Prostate gland (tissue), 2 donors: ENCODE measurements at regions of chr22 and their contacts with region 1.

Region 1: GRCh38 chr22:37199103-37199759 is 11.2 kb upstream of the C1QTNF6 start:
- DNase-seq: peak; percentile 96
- H3K4me3 ChIP-seq: peak overlapping the region; percentile 38 to 64
- H3K27ac ChIP-seq: peak overlapping the region; percentile 89 to 94
- H3K4me1 ChIP-seq: peaks cover 18% of the 10 kb centered on the region
- H3K27me3 ChIP-seq: no peaks in the 10 kb centered on the region
- CTCF ChIP-seq: peak; percentile 93 to 99 (median 96)
- POLR2A ChIP-seq: peak; percentile 99

Region 2: DNA sequence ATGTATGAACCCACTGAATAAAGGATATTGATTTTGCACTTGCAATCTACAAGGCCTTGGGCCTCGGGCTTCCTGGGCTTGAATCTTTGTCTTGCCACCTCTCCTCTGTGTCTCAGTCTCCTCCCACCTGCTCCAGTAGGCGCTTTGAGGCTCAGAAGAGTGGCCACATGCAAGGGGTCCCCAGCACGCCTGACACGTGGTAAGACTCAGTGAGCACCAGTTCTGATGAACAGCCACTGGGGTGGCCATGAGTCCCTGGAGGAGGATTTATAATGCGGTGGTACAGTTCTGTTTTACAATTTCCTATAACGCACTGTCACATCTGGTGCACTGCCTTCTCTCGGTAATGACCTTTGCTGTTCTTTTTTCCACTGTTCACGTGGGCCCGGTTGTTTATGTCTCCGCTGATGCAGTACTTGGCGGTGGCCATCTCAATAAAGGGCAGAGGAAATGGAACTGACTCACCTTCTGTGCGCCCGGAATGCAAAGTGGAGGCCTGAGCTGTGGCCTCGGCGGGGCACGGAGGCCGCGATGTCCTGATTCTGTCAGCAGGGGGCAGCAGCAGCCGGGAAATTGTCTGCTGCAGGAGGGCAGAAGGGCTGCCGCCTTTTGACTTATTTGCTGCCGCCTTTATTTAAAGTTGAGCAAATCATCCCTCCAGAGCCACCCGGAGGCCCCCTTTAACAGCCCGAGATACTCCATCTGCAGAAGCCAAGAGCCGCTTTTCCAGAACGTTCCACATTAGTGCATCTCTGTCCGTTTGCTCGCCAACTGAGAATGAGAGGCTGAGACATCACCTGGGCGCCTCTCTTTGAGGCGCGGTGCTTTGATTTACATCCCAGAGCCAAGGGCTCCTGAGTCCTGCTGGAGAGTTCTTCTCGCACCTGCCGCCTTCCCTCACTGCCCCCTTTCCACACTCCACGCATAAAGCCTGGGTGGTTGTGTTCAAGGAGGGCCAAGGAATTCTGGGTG is 417.3 kb before region 1 on chr22:
- intact Hi-C with region 1: loop called (anchors 10 kb)
- DNase-seq: peak; percentile 69
- H3K4me3 ChIP-seq: no peak overlapping the region
- H3K27ac ChIP-seq: no peak overlapping the region
- H3K4me1 ChIP-seq: no peaks in the 10 kb centered on the region
- H3K27me3 ChIP-seq: no peaks in the 10 kb centered on the region
- CTCF ChIP-seq: peak; percentile 91 to 95 (median 92)
- POLR2A ChIP-seq: no peak

Region 3: DNA sequence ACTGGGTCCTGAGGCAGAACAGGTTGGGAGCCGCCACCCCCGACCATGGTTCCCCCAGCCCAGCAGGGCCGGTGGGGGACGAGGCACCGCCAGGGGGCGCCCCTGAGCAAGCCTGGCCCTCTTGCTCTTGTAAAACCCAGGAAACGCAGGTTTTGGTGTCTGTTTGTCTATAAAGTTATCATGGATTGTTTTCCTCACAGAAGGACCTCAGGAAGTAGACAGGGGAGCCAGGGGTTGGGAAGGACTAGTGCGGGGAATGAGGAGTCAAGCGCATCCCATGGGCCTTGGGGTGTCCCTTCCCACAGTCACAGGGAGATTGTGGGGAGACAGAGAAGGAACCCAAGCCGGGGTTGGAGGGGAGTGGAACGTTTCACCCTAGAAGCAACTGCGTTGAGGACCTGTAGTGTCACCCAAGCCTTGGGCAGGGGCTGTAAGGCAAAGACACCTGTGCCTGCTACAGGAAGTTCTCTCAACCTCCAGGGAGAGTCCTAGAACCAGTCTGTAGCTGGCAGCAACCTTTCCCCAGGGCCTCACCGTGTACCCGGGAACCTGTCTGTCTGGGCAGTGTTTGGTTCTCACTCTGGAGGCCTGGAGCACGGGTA is 121.2 kb before region 1 on chr22:
- intact Hi-C with region 1: loop called (anchors 10 kb)
- DNase-seq: peak; percentile 32
- H3K4me3 ChIP-seq: no peak overlapping the region
- H3K27ac ChIP-seq: no peak overlapping the region
- H3K4me1 ChIP-seq: no peaks in the 10 kb centered on the region
- H3K27me3 ChIP-seq: no peaks in the 10 kb centered on the region
- CTCF ChIP-seq: peak; percentile 70 to 88 (median 80)
- POLR2A ChIP-seq: no peak

Region 4: DNA sequence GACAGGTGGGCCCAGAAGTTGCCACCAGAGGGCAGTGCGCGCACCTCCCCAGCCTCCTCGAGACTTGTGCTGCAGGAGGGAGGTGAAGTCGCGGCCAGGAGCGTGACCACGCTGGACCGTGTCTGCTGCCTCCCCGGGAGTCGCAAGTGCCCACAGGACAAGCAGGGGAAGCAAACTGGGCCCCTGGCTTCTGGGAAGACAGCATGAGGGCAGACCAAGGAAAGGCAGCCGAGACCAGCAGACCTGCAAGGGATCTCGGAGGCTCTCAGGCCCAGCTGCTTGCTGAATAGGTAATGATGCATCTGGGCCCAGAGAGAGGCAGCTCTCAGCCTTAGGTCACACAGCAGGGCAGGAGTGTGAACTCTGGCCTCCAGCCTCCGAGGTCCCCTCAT is 32.6 kb before region 1 on chr22:
- intact Hi-C with region 1: loop called (anchors 1 kb)
- DNase-seq: peak; percentile 80
- H3K4me3 ChIP-seq: no peak overlapping the region
- H3K27ac ChIP-seq: peak overlapping the region in 1 of 2 donors; percentile 30
- H3K4me1 ChIP-seq: peaks cover 4% of the 10 kb centered on the region
- H3K27me3 ChIP-seq: no peaks in the 10 kb centered on the region
- CTCF ChIP-seq: peak; percentile 93 to 98 (median 94)
- POLR2A ChIP-seq: no peak

Region 5: GRCh38 chr22:37186228-37186996 is 12.8 kb before region 1 on chr22:
- intact Hi-C with region 1: no loop called
- DNase-seq: no peak
- H3K4me3 ChIP-seq: no peak overlapping the region
- H3K27ac ChIP-seq: peak overlapping the region in 1 of 2 donors; percentile 72
- H3K4me1 ChIP-seq: peaks cover 14% of the 10 kb centered on the region
- H3K27me3 ChIP-seq: no peaks in the 10 kb centered on the region
- CTCF ChIP-seq: no peak
- POLR2A ChIP-seq: no peak